ENCODE measurements at regions of chr9 and their contacts with region 1.

Region 1: DNA sequence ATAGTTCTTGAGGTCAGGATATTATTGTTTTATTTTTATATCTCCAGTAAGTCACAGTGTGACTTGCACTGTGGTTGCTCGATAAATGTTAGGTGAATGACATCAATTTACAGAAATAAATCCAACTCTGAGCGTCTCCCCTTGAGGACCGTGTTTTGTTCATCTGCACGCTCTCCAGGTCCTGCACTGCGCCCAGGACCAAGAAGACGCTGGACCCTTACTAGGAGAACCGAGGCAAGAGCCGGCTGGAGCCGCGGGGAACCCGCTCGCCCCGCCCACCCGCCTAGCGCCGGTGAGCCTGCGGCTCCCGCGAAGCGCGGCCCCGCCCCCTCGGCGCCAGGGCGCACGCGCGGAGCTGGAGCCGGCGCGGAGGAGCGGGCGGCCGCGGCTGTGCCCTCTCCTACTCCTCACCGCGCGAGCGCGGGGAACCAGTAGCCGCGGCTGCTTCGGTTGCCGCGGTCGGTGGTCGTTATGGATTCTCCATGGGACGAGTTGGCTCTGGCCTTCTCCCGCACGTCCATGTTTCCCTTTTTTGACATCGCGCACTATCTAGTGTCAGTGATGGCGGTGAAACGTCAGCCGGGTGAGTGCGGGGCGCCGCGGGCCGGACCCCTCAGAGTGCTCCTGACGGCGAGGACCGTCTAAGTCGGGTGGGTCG is at the start of gene TMEM38B:
- DNase-seq: peak; percentile 79 to 90
- H3K4me3 ChIP-seq: peak within 1 kb of the TSS; percentile 95
- H3K4me3 Mint-ChIP-seq: peak within 1 kb of the TSS; percentile 75
- H3K27ac Mint-ChIP-seq: no peak within 1 kb of the TSS
- H3K4me1 ChIP-seq: 0 out of 2 replicates have a peak, but pooled peaks cover 15% of the 10 kb centered on the region
- H3K4me1 Mint-ChIP-seq: peaks cover 11% of the 10 kb centered on the region
- H3K27me3 ChIP-seq: no peaks in the 10 kb centered on the region
- H3K27me3 Mint-ChIP-seq: peaks cover 3% of the 10 kb centered on the region
- CTCF ChIP-seq: no peak
- total RNA-seq, gene TMEM38B: 38.6 and 48.6 TPM in 2 replicates

Region 2: GRCh38 chr9:105447814-105448812 is 246.2 kb before region 1 on chr9 and contains the start of gene FSD1L:
- CTCF ChIA-PET with region 1: no interaction called
- POLR2A ChIA-PET with region 1: no interaction called
- intact Hi-C with region 1: loop called (anchors 10 kb)
- DNase-seq: peak; percentile 93 to 94
- H3K4me3 ChIP-seq: peak within 1 kb of the TSS; percentile 68
- H3K4me3 Mint-ChIP-seq: peak within 1 kb of the TSS; percentile 92
- H3K27ac Mint-ChIP-seq: peak within 1 kb of the TSS; percentile 85
- H3K4me1 ChIP-seq: peaks cover 12% of the 10 kb centered on the region
- H3K4me1 Mint-ChIP-seq: peaks cover 5% of the 10 kb centered on the region
- H3K27me3 ChIP-seq: no peaks in the 10 kb centered on the region
- H3K27me3 Mint-ChIP-seq: no peaks in the 10 kb centered on the region
- CTCF ChIP-seq: peak in 1 of 2 experiments; percentile 13
- total RNA-seq, gene FSD1L: 4.7 and 5.7 TPM in 2 replicates

Region 3: GRCh38 chr9:105656131-105656921 is 38.0 kb before region 1 on chr9:
- CTCF ChIA-PET with region 1: interaction called, 6 read pairs
- POLR2A ChIA-PET with region 1: no interaction called
- intact Hi-C with region 1: loop called (anchors 1 kb)
- DNase-seq: peak; percentile 50 to 74
- H3K4me3 ChIP-seq: peak overlapping the region; percentile 94
- H3K4me3 Mint-ChIP-seq: peak overlapping the region; percentile 82
- H3K27ac Mint-ChIP-seq: peak overlapping the region; percentile 34
- H3K4me1 ChIP-seq: no peaks in the 10 kb centered on the region
- H3K4me1 Mint-ChIP-seq: peaks cover 7% of the 10 kb centered on the region
- H3K27me3 ChIP-seq: no peaks in the 10 kb centered on the region
- H3K27me3 Mint-ChIP-seq: no peaks in the 10 kb centered on the region
- CTCF ChIP-seq: peak; percentile 4 to 22

Region 4: GRCh38 chr9:105667867-105668266 is 26.5 kb before region 1 on chr9:
- CTCF ChIA-PET with region 1: interaction called, 5 read pairs
- POLR2A ChIA-PET with region 1: interaction called, 4 read pairs
- intact Hi-C with region 1: loop called (anchors 1 kb)
- DNase-seq: peak; percentile 62 to 74
- H3K4me3 ChIP-seq: no peak overlapping the region
- H3K4me3 Mint-ChIP-seq: peak overlapping the region; percentile 13
- H3K27ac Mint-ChIP-seq: peak overlapping the region; percentile 1
- H3K4me1 ChIP-seq: peaks cover 14% of the 10 kb centered on the region; the same call in 1 of the 2 replicates
- H3K4me1 Mint-ChIP-seq: peaks cover 32% of the 10 kb centered on the region
- H3K27me3 ChIP-seq: no peaks in the 10 kb centered on the region
- H3K27me3 Mint-ChIP-seq: no peaks in the 10 kb centered on the region
- CTCF ChIP-seq: no peak

Region 5: GRCh38 chr9:105712773-105713172 is 18.5 kb after region 1 on chr9:
- CTCF ChIA-PET with region 1: interaction called, 10 read pairs
- POLR2A ChIA-PET with region 1: no interaction called
- intact Hi-C with region 1: no loop called
- DNase-seq: no peak
- H3K4me3 ChIP-seq: no peak overlapping the region
- H3K4me3 Mint-ChIP-seq: no peak overlapping the region
- H3K27ac Mint-ChIP-seq: no peak overlapping the region
- H3K4me1 ChIP-seq: no peaks in the 10 kb centered on the region
- H3K4me1 Mint-ChIP-seq: no peaks in the 10 kb centered on the region
- H3K27me3 ChIP-seq: no peaks in the 10 kb centered on the region
- H3K27me3 Mint-ChIP-seq: no peaks in the 10 kb centered on the region
- CTCF ChIP-seq: no peak

Region 6: DNA sequence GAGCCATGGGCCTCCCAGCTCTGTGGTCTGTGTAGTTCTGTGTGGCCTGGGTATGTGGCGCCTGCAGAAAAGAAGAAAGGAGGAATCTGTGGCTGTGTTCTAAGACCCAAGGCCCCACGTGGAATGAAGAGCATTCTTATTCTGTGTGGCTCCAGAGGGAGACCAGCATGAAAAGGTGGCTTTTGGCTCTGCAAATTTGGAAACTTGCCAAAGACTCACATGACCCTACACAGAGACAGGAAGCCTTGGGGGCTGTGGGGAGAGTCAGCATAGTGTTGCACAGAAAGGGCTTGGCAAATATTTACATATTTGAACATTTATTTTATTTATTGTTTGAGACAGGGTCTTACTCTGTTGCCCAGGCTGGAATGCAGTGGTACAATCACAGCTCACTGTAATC is 193.4 kb after region 1 on chr9:
- CTCF ChIA-PET with region 1: no interaction called
- POLR2A ChIA-PET with region 1: no interaction called
- intact Hi-C with region 1: no loop called
- DNase-seq: no peak
- H3K4me3 ChIP-seq: no peak overlapping the region
- H3K4me3 Mint-ChIP-seq: no peak overlapping the region
- H3K27ac Mint-ChIP-seq: no peak overlapping the region
- H3K4me1 ChIP-seq: no peaks in the 10 kb centered on the region
- H3K4me1 Mint-ChIP-seq: no peaks in the 10 kb centered on the region
- H3K27me3 ChIP-seq: no peaks in the 10 kb centered on the region
- H3K27me3 Mint-ChIP-seq: peaks cover 2% of the 10 kb centered on the region
- CTCF ChIP-seq: no peak